ENCODE measurements at regions of chr18 and their contacts with region 1.

Region 1: DNA sequence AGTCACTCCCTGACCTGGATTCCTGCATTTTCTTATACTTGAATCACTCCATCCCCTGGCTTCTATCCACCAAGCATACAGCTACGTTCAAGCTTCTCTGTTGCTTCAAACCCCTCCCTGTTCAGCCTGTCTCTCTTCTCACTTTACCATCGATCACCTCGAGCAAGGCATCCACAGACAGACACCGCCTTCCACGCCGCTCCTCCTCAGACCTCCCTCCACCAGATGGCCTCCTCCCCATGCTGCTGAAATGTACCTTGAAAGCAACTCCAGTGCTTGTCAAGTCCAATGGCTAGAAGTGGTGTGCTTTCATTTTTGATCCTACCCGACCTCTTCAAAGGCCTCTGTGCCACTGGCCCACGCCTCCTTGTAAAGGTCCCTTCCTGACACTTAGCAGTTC is 131.3 kb upstream of the ACAA2 start:
- DNase-seq: peak in 1 of 2 donors; percentile 18
- ATAC-seq: peak in 1 of 2 donors; percentile 46
- H3K4me3 ChIP-seq: no peak overlapping the region
- H3K27ac ChIP-seq: no peak overlapping the region
- H3K4me1 ChIP-seq: no peaks in the 10 kb centered on the region
- H3K27me3 ChIP-seq: peaks cover 0 to 4% (median 0%) of the 10 kb centered on the region in 3 donors
- CTCF ChIP-seq: peak in 2 of 5 experiments; percentile 14 to 28
- POLR2A ChIP-seq: no peak

Region 2: DNA sequence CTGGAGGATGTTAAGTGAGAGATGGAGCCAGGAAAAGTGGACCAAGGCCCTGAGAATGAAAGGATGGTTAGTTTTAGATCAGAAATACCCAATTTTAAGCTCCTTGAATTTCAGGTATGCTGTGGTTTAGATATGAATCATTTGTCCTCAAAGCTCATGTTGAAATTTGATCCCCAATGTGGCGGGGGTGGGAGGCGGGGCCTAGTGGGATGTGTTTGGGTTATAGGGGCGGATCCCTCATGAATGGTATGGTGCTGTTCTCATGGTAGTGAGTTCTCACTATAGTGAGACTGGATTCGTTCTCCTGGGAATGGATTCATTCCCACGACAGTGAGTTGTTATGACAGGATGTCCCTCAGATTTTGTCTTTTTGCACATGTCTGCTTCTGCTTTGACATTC is 238.9 kb after region 1 on chr18:
- in situ Hi-C with region 1: no loop called
- intact Hi-C with region 1: no loop called
- DNase-seq: no peak
- ATAC-seq: no peak
- H3K4me3 ChIP-seq: no peak overlapping the region
- H3K27ac ChIP-seq: no peak overlapping the region
- H3K4me1 ChIP-seq: no peaks in the 10 kb centered on the region
- H3K27me3 ChIP-seq: peaks cover 0 to 16% (median 13%) of the 10 kb centered on the region in 3 donors
- CTCF ChIP-seq: no peak
- POLR2A ChIP-seq: no peak

Region 3: GRCh38 chr18:50194631-50195532 is 250.2 kb after region 1 on chr18 and contains the start of gene MYO5B:
- in situ Hi-C with region 1: no loop called
- intact Hi-C with region 1: loop called (anchors 1 kb)
- DNase-seq: no peak
- ATAC-seq: peak; percentile 78 to 81
- H3K4me3 ChIP-seq: peak within 1 kb of the TSS; percentile 44 to 61 (median 50)
- H3K27ac ChIP-seq: no peak within 1 kb of the TSS
- H3K4me1 ChIP-seq: peaks cover 0 to 6% of the 10 kb centered on the region in 2 donors
- H3K27me3 ChIP-seq: peaks cover 53 to 64% (median 63%) of the 10 kb centered on the region in 3 donors
- CTCF ChIP-seq: peak in 4 of 5 experiments; percentile 46 to 72 (median 64)
- POLR2A ChIP-seq: no peak
- total RNA-seq, gene MYO5B: 0.05 to 0.60 (median 0.35) TPM